Activated CD4-positive, alpha-beta T cell treated with anti-CD3 and anti-CD28 coated beads, Interleukin-2, amount 10 ng/mL, durations not matched to agents 24 days and 14 days (primary cell): ENCODE measurements at regions of chr7 and their contacts with region 1.

Region 1: GRCh38 chr7:36389371-36390198 is at the start of gene ANLN:
- DNase-seq: peak; percentile 97
- H3K4me3 Mint-ChIP-seq: peak within 1 kb of the TSS; percentile 92
- H3K27ac Mint-ChIP-seq: peak within 1 kb of the TSS; percentile 85
- H3K4me1 Mint-ChIP-seq: peaks cover 33% of the 10 kb centered on the region
- H3K27me3 Mint-ChIP-seq: peaks cover 12% of the 10 kb centered on the region
- total RNA-seq, gene ANLN: 35.6 and 35.9 TPM in 2 replicates

Region 2: GRCh38 chr7:35729061-35729783 is 660.4 kb before region 1 on chr7:
- intact Hi-C with region 1: loop called (anchors 10 kb)
- DNase-seq: peak; percentile 74
- H3K4me3 Mint-ChIP-seq: peak overlapping the region; percentile 39
- H3K27ac Mint-ChIP-seq: peak overlapping the region; percentile 48
- H3K4me1 Mint-ChIP-seq: peaks cover 44% of the 10 kb centered on the region
- H3K27me3 Mint-ChIP-seq: peaks cover 11% of the 10 kb centered on the region

Region 3: DNA sequence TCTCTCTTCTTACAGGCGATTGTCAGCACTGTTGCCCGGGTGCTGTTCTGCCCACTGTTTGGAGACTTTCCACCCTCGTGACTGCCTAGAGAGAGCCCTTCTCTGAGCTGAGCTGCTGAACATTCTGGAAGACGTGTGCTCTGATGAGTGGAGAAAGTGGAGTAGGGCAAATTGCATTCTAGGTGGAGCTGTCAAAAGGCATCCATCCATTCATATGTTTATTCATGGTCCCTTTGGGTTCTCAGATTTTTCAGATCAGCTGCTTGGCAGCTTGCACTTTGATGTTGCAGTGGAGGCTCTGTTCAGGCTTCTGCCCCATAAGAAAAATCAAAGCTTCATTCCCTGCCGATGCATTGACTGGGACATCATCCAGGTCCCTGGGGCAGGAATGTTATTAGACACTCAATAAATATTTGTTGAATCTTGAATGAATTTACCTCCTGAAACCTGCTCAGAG is 357.2 kb before region 1 on chr7:
- intact Hi-C with region 1: no loop called
- DNase-seq: no peak
- H3K4me3 Mint-ChIP-seq: no peak overlapping the region
- H3K27ac Mint-ChIP-seq: no peak overlapping the region
- H3K4me1 Mint-ChIP-seq: no peaks in the 10 kb centered on the region
- H3K27me3 Mint-ChIP-seq: peaks cover 21% of the 10 kb centered on the region

Region 4: GRCh38 chr7:36244429-36244828 is 145.2 kb before region 1 on chr7:
- intact Hi-C with region 1: no loop called
- DNase-seq: no peak
- H3K4me3 Mint-ChIP-seq: no peak overlapping the region
- H3K27ac Mint-ChIP-seq: no peak overlapping the region
- H3K4me1 Mint-ChIP-seq: no peaks in the 10 kb centered on the region
- H3K27me3 Mint-ChIP-seq: no peaks in the 10 kb centered on the region

Region 5: DNA sequence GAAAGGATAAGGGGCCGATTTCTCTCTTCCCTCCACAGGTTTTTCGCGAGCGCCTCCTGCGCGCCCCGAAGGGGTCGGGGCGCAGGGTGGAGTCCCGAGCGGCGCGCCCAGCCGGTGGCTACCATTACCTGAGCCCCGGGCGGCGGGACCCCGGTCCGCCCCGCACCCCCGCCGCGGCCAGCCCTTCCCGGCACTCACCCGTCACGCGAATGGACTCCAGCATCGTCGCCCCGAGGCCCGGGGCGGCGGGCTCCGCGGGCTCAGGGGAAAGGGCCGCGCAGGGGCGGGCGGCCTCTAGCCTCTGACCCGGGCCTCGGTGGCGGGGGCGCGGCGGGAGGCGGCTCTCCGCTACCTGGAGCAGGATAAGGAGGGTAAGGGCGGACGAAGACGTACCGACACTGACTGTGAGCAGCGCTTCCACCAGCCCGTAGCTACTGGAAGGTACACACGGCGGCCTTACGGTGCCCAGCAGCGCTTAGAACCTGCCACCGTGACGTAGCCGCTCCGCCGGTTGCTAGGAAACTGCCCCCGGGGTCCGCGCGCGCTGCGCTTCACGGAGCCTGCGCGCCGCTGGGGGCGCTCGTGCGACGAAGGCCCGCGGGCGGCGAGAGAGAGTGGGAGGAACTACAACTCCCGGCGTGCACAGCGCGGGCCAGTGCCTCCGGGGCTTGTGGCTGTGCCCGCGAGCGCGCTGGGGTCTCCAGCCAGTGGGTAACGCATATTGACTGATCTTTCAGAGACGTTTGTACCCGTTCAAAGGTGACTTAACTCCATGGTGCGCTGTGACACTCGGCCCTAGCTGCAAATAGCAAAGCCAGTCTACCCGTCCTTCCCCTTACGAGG is 22.6 kb before region 1 on chr7:
- intact Hi-C with region 1: loop called (anchors 1 kb)
- DNase-seq: peak; percentile 98
- H3K4me3 Mint-ChIP-seq: peak overlapping the region; percentile 91
- H3K27ac Mint-ChIP-seq: peak overlapping the region; percentile 36
- H3K4me1 Mint-ChIP-seq: peaks cover 4% of the 10 kb centered on the region
- H3K27me3 Mint-ChIP-seq: peaks cover 37% of the 10 kb centered on the region

Region 6: GRCh38 chr7:36686499-36686898 is 296.9 kb after region 1 on chr7:
- intact Hi-C with region 1: loop called (anchors 10 kb)
- DNase-seq: peak; percentile 73
- H3K4me3 Mint-ChIP-seq: peak overlapping the region; percentile 41
- H3K27ac Mint-ChIP-seq: peak overlapping the region; percentile 91
- H3K4me1 Mint-ChIP-seq: peaks cover 67% of the 10 kb centered on the region
- H3K27me3 Mint-ChIP-seq: no peaks in the 10 kb centered on the region

Region 7: DNA sequence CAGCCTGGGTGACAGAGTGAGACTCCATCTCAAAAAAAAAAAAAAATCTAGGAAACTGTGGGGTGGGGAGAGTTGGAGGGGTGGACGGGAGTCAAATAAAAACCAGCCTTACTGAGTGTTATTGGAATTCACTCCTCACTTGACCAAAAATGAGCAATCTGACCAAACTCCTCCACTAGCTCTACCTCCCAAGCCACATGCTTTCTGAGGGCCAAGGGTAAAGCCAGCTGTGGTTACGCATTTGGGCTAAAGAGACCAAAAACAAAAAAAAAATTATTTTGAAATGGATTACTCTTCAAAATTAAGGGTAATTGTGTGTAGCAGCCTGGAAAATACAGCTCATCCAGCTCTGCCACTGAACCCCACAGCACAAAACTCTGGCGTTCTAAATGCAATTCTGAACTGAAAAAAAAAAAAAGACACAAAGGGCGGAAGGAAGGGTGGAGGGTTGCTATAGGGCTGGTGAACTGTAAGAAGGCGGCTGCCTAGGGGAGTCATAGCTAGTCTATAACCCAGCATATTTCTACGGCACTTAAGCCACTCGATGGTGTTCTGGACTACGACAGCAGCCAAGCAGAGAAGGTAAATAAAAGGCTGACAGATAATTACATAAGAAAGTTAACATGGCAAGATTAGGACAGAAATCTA is 1051.3 kb after region 1 on chr7:
- intact Hi-C with region 1: loop called (anchors 2 kb)
- DNase-seq: peak; percentile 80
- H3K4me3 Mint-ChIP-seq: peak overlapping the region; percentile 68
- H3K27ac Mint-ChIP-seq: peak overlapping the region; percentile 85
- H3K4me1 Mint-ChIP-seq: peaks cover 51% of the 10 kb centered on the region
- H3K27me3 Mint-ChIP-seq: no peaks in the 10 kb centered on the region